CD8-positive, alpha-beta T cell (primary cell): ENCODE measurements at regions of chr10 and their contacts with region 1.

Region 1: GRCh38 chr10:102132563-102133372 is at the start of gene PPRC1:
- DNase-seq: peak; percentile 91 to 99 (median 96)
- ATAC-seq: peak; percentile 93
- H3K4me3 ChIP-seq: peak within 1 kb of the TSS; percentile 79 to 96
- H3K4me3 Mint-ChIP-seq: peak within 1 kb of the TSS; percentile 96
- H3K27ac ChIP-seq: peak within 1 kb of the TSS; percentile 75 to 92
- H3K27ac Mint-ChIP-seq: peak within 1 kb of the TSS; percentile 95
- H3K4me1 ChIP-seq: peaks cover 26% of the 10 kb centered on the region
- H3K4me1 Mint-ChIP-seq: peaks cover 40% of the 10 kb centered on the region
- H3K27me3 ChIP-seq: no peaks in the 10 kb centered on the region
- H3K27me3 Mint-ChIP-seq: no peaks in the 10 kb centered on the region
- CTCF ChIP-seq: peak; percentile 96
- total RNA-seq, gene PPRC1: 35.2 to 38.5 TPM

Region 2: DNA sequence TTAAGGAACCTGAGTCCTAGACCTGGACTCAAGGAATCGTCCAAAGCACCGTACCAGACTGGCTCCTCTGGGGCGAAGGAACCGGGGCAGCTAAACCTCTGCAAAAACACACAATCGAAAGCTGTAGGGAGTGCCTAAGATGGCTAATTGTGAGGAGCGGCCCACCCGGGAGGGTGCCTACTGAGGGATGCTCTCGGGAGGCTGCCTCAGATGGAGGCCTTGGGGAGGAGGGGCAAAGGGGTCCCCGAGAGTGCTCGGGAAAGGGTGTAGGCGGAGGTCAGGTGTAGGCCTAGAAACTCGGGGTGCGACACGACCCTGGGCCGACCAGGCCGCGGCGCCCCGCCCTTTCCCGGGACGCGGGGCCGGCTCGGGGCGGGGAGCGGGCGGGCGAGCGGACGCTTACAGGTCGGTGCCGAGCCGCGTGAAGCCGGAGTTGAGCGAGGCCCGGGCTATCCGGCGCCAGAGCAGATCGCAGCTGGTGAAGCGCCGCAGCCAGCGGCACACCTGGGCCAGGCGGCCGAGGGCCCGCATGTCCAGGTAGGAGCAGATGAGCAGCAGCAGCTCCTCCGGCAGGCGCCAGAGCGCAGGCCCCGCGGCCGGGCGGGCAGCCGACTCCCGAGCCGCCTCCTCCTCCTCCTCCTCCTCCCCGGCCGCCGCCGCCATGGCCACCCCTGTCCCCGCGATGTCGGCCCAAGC is 438.6 kb before region 1 on chr10:
- CTCF ChIA-PET with region 1: no interaction called
- POLR2A ChIA-PET with region 1: no interaction called
- intact Hi-C with region 1: loop called in 1 of 2 experiments (anchors 10 kb)
- DNase-seq: peak; percentile 42 to 83 (median 70)
- ATAC-seq: peak; percentile 66
- H3K4me3 ChIP-seq: peak overlapping the region; percentile 85 to 88
- H3K4me3 Mint-ChIP-seq: peak overlapping the region; percentile 97
- H3K27ac ChIP-seq: peak overlapping the region; percentile 97 to 99
- H3K27ac Mint-ChIP-seq: peak overlapping the region; percentile 99
- H3K4me1 ChIP-seq: peaks cover 36% of the 10 kb centered on the region
- H3K4me1 Mint-ChIP-seq: peaks cover 48% of the 10 kb centered on the region
- H3K27me3 ChIP-seq: no peaks in the 10 kb centered on the region
- H3K27me3 Mint-ChIP-seq: no peaks in the 10 kb centered on the region
- CTCF ChIP-seq: no peak

Region 3: GRCh38 chr10:101830322-101831168 is 302.2 kb before region 1 on chr10:
- CTCF ChIA-PET with region 1: no interaction called
- POLR2A ChIA-PET with region 1: no interaction called
- intact Hi-C with region 1: loop called in 1 of 2 experiments (anchors 5 kb)
- DNase-seq: peak; percentile 84 to 98 (median 93)
- ATAC-seq: peak; percentile 74
- H3K4me3 ChIP-seq: peak overlapping the region; percentile 49 to 51
- H3K4me3 Mint-ChIP-seq: peak overlapping the region; percentile 87
- H3K27ac ChIP-seq: peak overlapping the region; percentile 66 to 84
- H3K27ac Mint-ChIP-seq: peak overlapping the region; percentile 97
- H3K4me1 ChIP-seq: peaks cover 40% of the 10 kb centered on the region
- H3K4me1 Mint-ChIP-seq: peaks cover 47% of the 10 kb centered on the region
- H3K27me3 ChIP-seq: no peaks in the 10 kb centered on the region
- H3K27me3 Mint-ChIP-seq: no peaks in the 10 kb centered on the region
- CTCF ChIP-seq: no peak

Region 4: GRCh38 chr10:102064868-102065560 is 67.8 kb before region 1 on chr10 and contains the start of gene HPS6:
- CTCF ChIA-PET with region 1: no interaction called
- POLR2A ChIA-PET with region 1: no interaction called
- intact Hi-C with region 1: loop called in 1 of 2 experiments (anchors 1 kb)
- DNase-seq: peak; percentile 69 to 94 (median 89)
- ATAC-seq: peak; percentile 98
- H3K4me3 ChIP-seq: peak within 1 kb of the TSS; percentile 57 to 97
- H3K4me3 Mint-ChIP-seq: peak within 1 kb of the TSS; percentile 87
- H3K27ac ChIP-seq: peak within 1 kb of the TSS; percentile 66 to 85
- H3K27ac Mint-ChIP-seq: peak within 1 kb of the TSS; percentile 93
- H3K4me1 ChIP-seq: peaks cover 21% of the 10 kb centered on the region
- H3K4me1 Mint-ChIP-seq: peaks cover 28% of the 10 kb centered on the region
- H3K27me3 ChIP-seq: no peaks in the 10 kb centered on the region
- H3K27me3 Mint-ChIP-seq: no peaks in the 10 kb centered on the region
- CTCF ChIP-seq: no peak
- total RNA-seq, gene HPS6: 17.5 to 18.1 TPM

Region 5: GRCh38 chr10:102090772-102091171 is 42.0 kb before region 1 on chr10:
- CTCF ChIA-PET with region 1: no interaction called
- POLR2A ChIA-PET with region 1: no interaction called
- intact Hi-C with region 1: no loop called
- DNase-seq: no peak
- ATAC-seq: no peak
- H3K4me3 ChIP-seq: no peak overlapping the region
- H3K4me3 Mint-ChIP-seq: no peak overlapping the region
- H3K27ac ChIP-seq: no peak overlapping the region
- H3K27ac Mint-ChIP-seq: no peak overlapping the region
- H3K4me1 ChIP-seq: no peaks in the 10 kb centered on the region
- H3K4me1 Mint-ChIP-seq: no peaks in the 10 kb centered on the region
- H3K27me3 ChIP-seq: no peaks in the 10 kb centered on the region
- H3K27me3 Mint-ChIP-seq: no peaks in the 10 kb centered on the region
- CTCF ChIP-seq: no peak

Region 6: GRCh38 chr10:102120142-102120990 is 12.4 kb before region 1 on chr10 and contains the start of gene LDB1:
- CTCF ChIA-PET with region 1: interaction called, 22 read pairs
- POLR2A ChIA-PET with region 1: interaction called, 7 read pairs
- intact Hi-C with region 1: loop called (anchors 1 kb)
- DNase-seq: peak; percentile 40 to 91 (median 70)
- ATAC-seq: peak; percentile 45
- H3K4me3 ChIP-seq: peak within 1 kb of the TSS; percentile 84 to 94
- H3K4me3 Mint-ChIP-seq: peak within 1 kb of the TSS; percentile 90
- H3K27ac ChIP-seq: peak within 1 kb of the TSS; percentile 97 to 98
- H3K27ac Mint-ChIP-seq: peak within 1 kb of the TSS; percentile 98
- H3K4me1 ChIP-seq: peaks cover 51% of the 10 kb centered on the region
- H3K4me1 Mint-ChIP-seq: peaks cover 55% of the 10 kb centered on the region
- H3K27me3 ChIP-seq: no peaks in the 10 kb centered on the region
- H3K27me3 Mint-ChIP-seq: no peaks in the 10 kb centered on the region
- CTCF ChIP-seq: no peak
- total RNA-seq, gene LDB1: 113 to 124 TPM

Region 7: DNA sequence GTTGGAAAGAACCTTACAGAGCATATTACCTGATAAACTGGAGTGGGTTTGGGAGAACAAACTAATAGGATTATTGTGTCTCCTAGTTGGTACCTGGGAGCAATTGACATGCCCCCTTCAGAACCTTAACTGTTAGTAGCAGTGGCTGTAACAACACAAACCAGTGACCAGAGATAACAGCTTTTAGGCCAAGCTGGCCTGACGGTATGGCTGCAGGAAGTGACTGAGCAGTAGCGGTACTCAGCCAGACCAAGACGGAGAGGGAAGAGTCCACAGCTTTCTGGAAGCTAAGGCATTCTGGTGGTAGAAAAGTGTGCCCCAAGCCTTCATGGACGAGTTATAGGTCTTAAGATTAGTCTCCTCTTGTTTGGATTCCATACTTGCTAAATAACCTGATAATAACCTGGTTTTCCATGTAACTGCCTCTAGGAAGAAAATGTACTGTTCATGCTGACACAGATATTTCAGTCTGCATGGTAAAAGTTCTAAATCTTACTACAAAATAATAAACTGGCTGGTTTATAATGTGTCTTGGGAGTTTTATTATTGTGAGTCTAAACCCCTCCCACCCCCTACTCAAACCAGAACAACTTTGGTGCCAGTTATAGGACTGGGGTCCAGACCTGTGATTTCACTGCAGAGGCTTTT is 30.7 kb after region 1 on chr10:
- CTCF ChIA-PET with region 1: no interaction called
- POLR2A ChIA-PET with region 1: no interaction called
- intact Hi-C with region 1: no loop called
- DNase-seq: no peak
- ATAC-seq: no peak
- H3K4me3 ChIP-seq: no peak overlapping the region
- H3K4me3 Mint-ChIP-seq: no peak overlapping the region
- H3K27ac ChIP-seq: no peak overlapping the region
- H3K27ac Mint-ChIP-seq: no peak overlapping the region
- H3K4me1 ChIP-seq: no peaks in the 10 kb centered on the region
- H3K4me1 Mint-ChIP-seq: no peaks in the 10 kb centered on the region
- H3K27me3 ChIP-seq: no peaks in the 10 kb centered on the region
- H3K27me3 Mint-ChIP-seq: no peaks in the 10 kb centered on the region
- CTCF ChIP-seq: no peak

Region 8: DNA sequence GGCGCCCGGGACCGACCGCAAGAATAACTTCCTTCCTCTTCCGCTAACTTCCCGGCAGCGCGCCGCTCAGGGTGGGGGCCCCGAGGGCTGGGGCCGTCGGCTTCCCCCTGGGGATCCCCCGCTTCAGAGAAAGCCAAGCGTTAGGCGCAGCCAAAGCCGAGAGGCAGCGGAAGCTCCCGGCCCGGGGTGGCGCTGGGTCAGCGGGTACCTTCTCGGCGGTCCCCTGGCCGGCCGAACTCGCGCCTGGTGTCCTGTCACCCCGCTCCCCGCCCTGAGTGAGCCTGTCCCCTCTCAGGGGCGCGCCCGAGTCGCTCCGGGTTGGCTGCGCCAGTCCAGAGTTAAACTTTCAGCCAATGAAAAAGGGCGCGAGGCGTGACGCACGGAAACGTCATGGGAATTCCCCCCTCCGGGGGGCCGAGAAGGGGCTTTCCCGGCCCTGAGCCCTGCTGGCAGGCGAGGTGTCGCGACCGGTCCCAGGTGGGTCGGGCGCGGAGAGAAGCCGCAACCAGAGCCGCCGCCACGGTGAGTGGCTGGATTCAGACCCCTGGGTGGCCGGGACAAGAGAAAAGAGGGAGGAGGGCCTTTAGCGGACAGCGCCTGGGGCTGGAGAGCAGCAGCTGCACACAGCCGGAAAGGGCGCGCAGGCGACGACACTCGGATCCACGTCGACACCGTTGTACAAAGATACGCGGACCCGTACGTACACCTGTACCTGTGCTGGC is 261.5 kb after region 1 on chr10:
- CTCF ChIA-PET with region 1: interaction called, 3 read pairs
- POLR2A ChIA-PET with region 1: interaction called, 3 read pairs
- intact Hi-C with region 1: loop called in 1 of 2 experiments (anchors 1 kb)
- DNase-seq: peak; percentile 95 to 99 (median 98)
- ATAC-seq: peak; percentile 74
- H3K4me3 ChIP-seq: peak overlapping the region; percentile 89 to 95
- H3K4me3 Mint-ChIP-seq: peak overlapping the region; percentile 90
- H3K27ac ChIP-seq: peak overlapping the region; percentile 99 to 100
- H3K27ac Mint-ChIP-seq: peak overlapping the region; percentile 98
- H3K4me1 ChIP-seq: peaks cover 24% of the 10 kb centered on the region
- H3K4me1 Mint-ChIP-seq: peaks cover 37% of the 10 kb centered on the region
- H3K27me3 ChIP-seq: no peaks in the 10 kb centered on the region
- H3K27me3 Mint-ChIP-seq: no peaks in the 10 kb centered on the region
- CTCF ChIP-seq: no peak

Region 9: GRCh38 chr10:102713814-102714620 is 581.2 kb after region 1 on chr10 and contains the start of gene ARL3:
- CTCF ChIA-PET with region 1: no interaction called
- POLR2A ChIA-PET with region 1: no interaction called
- intact Hi-C with region 1: loop called in 1 of 2 experiments (anchors 10 kb)
- DNase-seq: peak; percentile 79 to 98 (median 94)
- ATAC-seq: peak; percentile 89
- H3K4me3 ChIP-seq: peak within 1 kb of the TSS; percentile 96 to 98
- H3K4me3 Mint-ChIP-seq: peak within 1 kb of the TSS; percentile 97
- H3K27ac ChIP-seq: peak within 1 kb of the TSS; percentile 84 to 91
- H3K27ac Mint-ChIP-seq: peak within 1 kb of the TSS; percentile 94
- H3K4me1 ChIP-seq: peaks cover 21% of the 10 kb centered on the region
- H3K4me1 Mint-ChIP-seq: peaks cover 59% of the 10 kb centered on the region
- H3K27me3 ChIP-seq: no peaks in the 10 kb centered on the region
- H3K27me3 Mint-ChIP-seq: no peaks in the 10 kb centered on the region
- CTCF ChIP-seq: peak; percentile 65
- total RNA-seq, gene ARL3: 0.49 to 0.75 TPM